ENCODE measurements at regions of chr22 and their contacts with region 1.

Region 1: DNA sequence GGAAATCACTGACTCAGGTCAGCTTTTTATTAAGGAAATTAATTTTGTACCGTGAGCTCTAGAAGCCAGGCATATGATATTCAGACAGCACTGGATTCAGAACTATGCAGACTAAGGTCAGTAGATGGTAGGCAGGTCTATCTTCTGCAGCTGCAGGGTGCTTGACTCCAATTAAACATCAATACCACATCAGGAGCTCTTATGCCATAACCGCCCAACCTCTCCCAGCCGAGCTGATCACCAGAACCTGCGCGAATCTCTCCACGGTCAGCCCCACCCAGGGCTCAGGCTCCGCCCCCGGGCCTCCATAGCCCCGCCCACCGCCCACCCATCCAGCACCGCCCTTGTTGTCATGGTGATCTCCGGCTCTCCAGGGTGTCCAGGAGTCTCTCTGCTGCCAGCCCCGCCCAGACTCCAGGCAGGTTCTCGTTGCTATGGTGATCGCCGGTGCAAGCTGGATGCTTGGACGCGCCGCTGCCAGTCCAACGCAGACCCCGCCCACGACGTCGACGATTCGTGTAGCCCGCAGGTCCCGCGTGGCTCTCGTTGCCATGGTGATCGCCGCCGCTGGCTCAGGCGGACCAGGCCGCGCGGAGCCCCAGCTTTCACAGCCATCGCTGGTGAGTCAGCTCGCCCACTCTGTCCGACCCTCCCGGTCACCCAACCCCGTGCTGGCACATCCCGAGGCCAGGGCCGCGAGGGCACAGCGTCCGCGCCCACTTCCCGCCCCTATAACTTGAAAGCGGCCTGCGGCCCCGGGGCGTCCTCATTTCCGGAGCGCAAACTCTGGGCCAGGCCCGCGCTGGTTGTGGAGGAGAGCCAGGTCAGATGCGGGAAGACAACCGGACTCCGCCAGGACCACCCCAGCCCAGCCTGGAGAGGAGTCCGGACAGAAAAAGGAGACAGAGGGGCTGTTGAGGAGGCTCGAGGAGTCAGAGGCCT is at the start of gene RAB36:
- DNase-seq: peak; percentile 93
- ATAC-seq: peak; percentile 60
- H3K4me3 Mint-ChIP-seq: peak within 1 kb of the TSS; percentile 49
- H3K27ac Mint-ChIP-seq: no peak within 1 kb of the TSS
- H3K4me1 Mint-ChIP-seq: peaks cover 41% of the 10 kb centered on the region
- H3K27me3 Mint-ChIP-seq: no peaks in the 10 kb centered on the region
- total RNA-seq, gene RAB36: 0.35 to 0.50 TPM

Region 2: GRCh38 chr22:22942511-22943329 is 202.5 kb before region 1 on chr22:
- CTCF ChIA-PET with region 1: no interaction called
- POLR2A ChIA-PET with region 1: interaction called, 12 read pairs
- intact Hi-C with region 1: no loop called
- DNase-seq: peak; percentile 92
- ATAC-seq: peak; percentile 90
- H3K4me3 Mint-ChIP-seq: no peak overlapping the region
- H3K27ac Mint-ChIP-seq: no peak overlapping the region
- H3K4me1 Mint-ChIP-seq: peaks cover 2% of the 10 kb centered on the region
- H3K27me3 Mint-ChIP-seq: no peaks in the 10 kb centered on the region

Region 3: GRCh38 chr22:23069502-23070357 is 75.5 kb before region 1 on chr22:
- CTCF ChIA-PET with region 1: no interaction called
- POLR2A ChIA-PET with region 1: no interaction called
- intact Hi-C with region 1: loop called in 1 of 2 experiments (anchors 1 kb)
- DNase-seq: peak; percentile 91
- ATAC-seq: peak; percentile 99
- H3K4me3 Mint-ChIP-seq: peak overlapping the region; percentile 65
- H3K27ac Mint-ChIP-seq: peak overlapping the region; percentile 42
- H3K4me1 Mint-ChIP-seq: peaks cover 8% of the 10 kb centered on the region
- H3K27me3 Mint-ChIP-seq: peaks cover 14% of the 10 kb centered on the region

Region 4: DNA sequence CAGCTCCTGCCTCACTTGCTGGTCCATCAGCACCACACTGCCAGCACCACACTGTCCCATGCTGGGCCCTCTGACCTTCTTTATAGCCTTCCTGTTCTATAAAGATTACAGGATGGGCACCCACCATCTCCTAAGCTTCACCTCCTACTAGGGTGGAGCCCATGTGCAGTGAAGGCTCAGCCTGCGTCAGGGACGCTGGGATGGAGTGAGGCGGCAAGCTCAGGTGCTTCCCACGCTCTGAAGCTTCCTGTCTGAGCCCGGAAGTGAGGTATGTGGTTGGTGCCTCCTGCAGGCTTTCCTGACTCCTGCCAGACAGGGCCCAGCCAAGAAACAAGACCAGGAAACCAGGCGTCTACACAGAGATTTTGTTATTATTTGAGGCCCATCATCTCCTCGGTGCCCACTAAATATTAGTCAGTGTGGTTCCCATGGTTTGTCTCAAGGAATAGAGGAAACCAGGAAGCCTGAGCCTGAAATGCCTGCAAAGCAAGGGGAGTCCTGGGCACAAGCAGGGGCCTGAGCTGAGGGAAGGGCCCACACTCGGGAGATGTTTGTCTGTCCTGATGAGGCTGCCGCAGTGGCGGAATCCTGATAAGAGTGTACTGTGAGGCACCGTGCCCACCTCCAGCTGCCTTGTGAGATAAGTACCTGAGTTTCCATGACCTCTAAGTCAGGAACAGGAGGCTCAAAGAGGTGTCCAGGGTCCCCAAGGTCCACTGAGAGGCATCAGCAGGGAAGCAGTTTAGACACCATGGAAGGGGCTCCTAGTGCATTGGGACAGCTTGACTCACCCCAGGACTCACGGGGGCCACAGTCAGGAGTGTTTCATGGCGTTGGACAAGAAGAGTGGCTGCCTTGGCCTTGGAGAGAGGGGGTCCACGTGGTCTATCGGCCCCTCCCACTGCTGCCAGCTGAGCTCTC is 25.4 kb before region 1 on chr22:
- CTCF ChIA-PET with region 1: no interaction called
- POLR2A ChIA-PET with region 1: no interaction called
- intact Hi-C with region 1: loop called in 1 of 2 experiments (anchors 2 kb)
- DNase-seq: peak; percentile 78
- ATAC-seq: peak; percentile 95
- H3K4me3 Mint-ChIP-seq: peak overlapping the region; percentile 33
- H3K27ac Mint-ChIP-seq: peak overlapping the region; percentile 90
- H3K4me1 Mint-ChIP-seq: peaks cover 16% of the 10 kb centered on the region
- H3K27me3 Mint-ChIP-seq: no peaks in the 10 kb centered on the region

Region 5: GRCh38 chr22:23219822-23220484 is 74.8 kb after region 1 on chr22:
- CTCF ChIA-PET with region 1: no interaction called
- POLR2A ChIA-PET with region 1: interaction called, 3 read pairs
- intact Hi-C with region 1: loop called (anchors 1 to 5 kb)
- DNase-seq: peak; percentile 89
- ATAC-seq: peak; percentile 88
- H3K4me3 Mint-ChIP-seq: peak overlapping the region; percentile 72
- H3K27ac Mint-ChIP-seq: peak overlapping the region; percentile 92
- H3K4me1 Mint-ChIP-seq: peaks cover 100% of the 10 kb centered on the region
- H3K27me3 Mint-ChIP-seq: no peaks in the 10 kb centered on the region

Region 6: DNA sequence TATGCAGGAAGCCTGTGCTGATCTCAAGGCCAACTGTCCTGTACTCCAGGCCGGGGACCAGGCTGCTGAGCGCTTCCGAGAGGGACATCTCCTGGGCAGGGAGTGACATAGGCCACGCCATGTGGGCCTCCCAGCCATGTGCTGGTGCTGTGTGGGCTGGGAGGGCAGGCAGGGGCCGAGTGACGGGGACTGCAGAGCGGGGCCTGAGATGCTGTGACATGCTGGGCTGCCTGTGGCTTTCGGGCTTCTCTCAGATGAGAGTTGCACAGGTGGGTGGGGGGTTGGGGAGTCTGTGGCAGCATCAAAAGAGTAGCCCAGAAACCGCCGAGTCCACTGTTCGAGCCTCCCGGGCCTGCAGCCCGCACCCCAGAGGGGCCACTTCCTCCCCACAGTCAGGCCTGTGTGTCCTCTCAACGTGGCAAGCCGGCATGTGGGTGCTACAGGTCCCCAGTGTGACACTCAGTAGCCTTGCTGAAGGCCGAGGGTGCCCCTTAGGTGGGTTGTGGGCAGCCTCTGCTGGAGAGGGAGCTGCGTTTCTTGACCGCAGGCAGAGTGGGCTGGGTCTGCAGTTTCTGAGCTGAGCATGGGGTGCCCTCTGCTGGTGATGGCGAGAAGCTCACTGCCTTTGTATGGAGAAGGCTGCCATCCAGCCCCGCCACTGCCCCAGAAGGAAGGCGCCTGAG is 136.3 kb after region 1 on chr22:
- CTCF ChIA-PET with region 1: interaction called, 11 read pairs
- POLR2A ChIA-PET with region 1: no interaction called
- intact Hi-C with region 1: no loop called
- DNase-seq: peak; percentile 89
- ATAC-seq: peak; percentile 71
- H3K4me3 Mint-ChIP-seq: no peak overlapping the region
- H3K27ac Mint-ChIP-seq: no peak overlapping the region
- H3K4me1 Mint-ChIP-seq: peaks cover 25% of the 10 kb centered on the region
- H3K27me3 Mint-ChIP-seq: no peaks in the 10 kb centered on the region

Region 7: GRCh38 chr22:23305922-23306374 is 160.7 kb after region 1 on chr22:
- CTCF ChIA-PET with region 1: no interaction called
- POLR2A ChIA-PET with region 1: no interaction called
- intact Hi-C with region 1: no loop called
- DNase-seq: no peak
- ATAC-seq: no peak
- H3K4me3 Mint-ChIP-seq: no peak overlapping the region
- H3K27ac Mint-ChIP-seq: no peak overlapping the region
- H3K4me1 Mint-ChIP-seq: no peaks in the 10 kb centered on the region
- H3K27me3 Mint-ChIP-seq: no peaks in the 10 kb centered on the region

Region 8: GRCh38 chr22:23874871-23875270 is 729.7 kb after region 1 on chr22:
- CTCF ChIA-PET with region 1: no interaction called
- POLR2A ChIA-PET with region 1: no interaction called
- intact Hi-C with region 1: no loop called
- DNase-seq: no peak
- ATAC-seq: no peak
- H3K4me3 Mint-ChIP-seq: no peak overlapping the region
- H3K27ac Mint-ChIP-seq: no peak overlapping the region
- H3K4me1 Mint-ChIP-seq: no peaks in the 10 kb centered on the region
- H3K27me3 Mint-ChIP-seq: no peaks in the 10 kb centered on the region

Measured in activated CD4-positive, alpha-beta T cell treated with anti-CD3 and anti-CD28 coated beads for 36 hours (primary cell).